Natural killer cell (primary cell): ENCODE measurements at regions of chr20 and their contacts with region 1.

Region 1: GRCh38 chr20:57398231-57398821 is 7.1 kb downstream of the RBM38 start:
- DNase-seq: peak; percentile 87 to 95
- ATAC-seq: peak; percentile 66 to 87 (median 78)
- H3K4me3 ChIP-seq: peak overlapping the region; percentile 17
- H3K4me3 Mint-ChIP-seq: peak overlapping the region; percentile 86
- H3K27ac ChIP-seq: peak overlapping the region; percentile 79
- H3K27ac Mint-ChIP-seq: peak overlapping the region; percentile 95 to 97
- H3K4me1 ChIP-seq: peaks cover 100% of the 10 kb centered on the region
- H3K4me1 Mint-ChIP-seq: peaks cover 79 to 94% of the 10 kb centered on the region in 2 donors
- H3K27me3 ChIP-seq: no peaks in the 10 kb centered on the region
- H3K27me3 Mint-ChIP-seq: no peaks in the 10 kb centered on the region
- CTCF ChIP-seq: no peak

Region 2: DNA sequence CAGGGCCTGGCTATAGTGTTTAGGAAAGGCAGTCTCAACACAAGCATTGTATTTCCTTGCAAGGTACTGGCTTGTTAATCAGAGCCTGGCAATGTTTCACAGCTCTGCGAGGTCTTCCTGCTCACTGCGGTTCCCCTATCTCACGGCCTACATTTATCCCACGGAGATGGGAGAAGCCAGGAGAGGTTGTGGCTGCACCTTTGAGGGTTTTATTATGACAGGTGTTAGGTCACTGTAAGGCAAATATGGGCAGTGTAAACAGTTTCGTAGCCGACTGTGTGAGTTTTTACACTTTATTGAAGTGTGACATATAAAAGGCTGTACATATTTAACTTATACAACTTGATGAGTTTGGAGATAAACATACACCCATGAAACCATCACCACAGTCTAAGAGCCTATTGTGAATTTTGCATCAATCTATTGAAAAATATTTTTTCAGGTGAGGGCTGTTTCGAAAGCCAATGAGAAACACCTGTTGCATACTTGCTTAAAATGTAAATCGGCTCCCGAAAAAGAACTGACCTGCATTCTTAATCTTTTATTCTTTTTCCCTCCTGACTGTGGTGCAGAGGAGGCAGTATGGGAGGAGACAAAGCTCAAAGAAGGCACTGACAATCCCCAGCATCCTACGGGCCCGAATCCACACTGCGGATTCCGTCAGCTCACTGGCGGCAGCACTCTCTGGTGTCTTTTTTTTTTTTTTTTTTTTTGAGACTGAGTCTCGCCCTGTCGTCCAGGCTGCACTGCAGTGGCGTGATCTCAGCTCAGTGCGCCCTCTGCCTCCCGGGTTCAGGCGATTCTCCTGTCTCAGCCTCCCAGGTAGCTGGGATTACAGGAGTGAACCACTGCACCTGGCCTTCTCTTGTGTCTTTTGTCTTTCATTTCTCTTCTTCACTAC is 14.6 kb before region 1 on chr20:
- intact Hi-C with region 1: loop called (anchors 2 kb)
- DNase-seq: no peak
- ATAC-seq: peak; percentile 40 to 59 (median 56)
- H3K4me3 ChIP-seq: no peak overlapping the region
- H3K4me3 Mint-ChIP-seq: peak overlapping the region; percentile 58
- H3K27ac ChIP-seq: peak overlapping the region; percentile 4
- H3K27ac Mint-ChIP-seq: peak overlapping the region; percentile 84 to 87
- H3K4me1 ChIP-seq: peaks cover 34% of the 10 kb centered on the region
- H3K4me1 Mint-ChIP-seq: peaks cover 40 to 47% of the 10 kb centered on the region in 2 donors
- H3K27me3 ChIP-seq: no peaks in the 10 kb centered on the region
- H3K27me3 Mint-ChIP-seq: no peaks in the 10 kb centered on the region
- CTCF ChIP-seq: no peak

Region 3: GRCh38 chr20:57432874-57433491 is 34.7 kb after region 1 on chr20:
- intact Hi-C with region 1: loop called (anchors 2 kb)
- DNase-seq: peak; percentile 53 to 82
- ATAC-seq: peak; percentile 64 to 80 (median 74)
- H3K4me3 ChIP-seq: no peak overlapping the region
- H3K4me3 Mint-ChIP-seq: peak overlapping the region; percentile 83
- H3K27ac ChIP-seq: peak overlapping the region; percentile 75
- H3K27ac Mint-ChIP-seq: peak overlapping the region; percentile 92 to 93
- H3K4me1 ChIP-seq: peaks cover 77% of the 10 kb centered on the region
- H3K4me1 Mint-ChIP-seq: peaks cover 57 to 59% of the 10 kb centered on the region in 2 donors
- H3K27me3 ChIP-seq: no peaks in the 10 kb centered on the region
- H3K27me3 Mint-ChIP-seq: no peaks in the 10 kb centered on the region
- CTCF ChIP-seq: no peak

Region 4: GRCh38 chr20:57480444-57481160 is 82.3 kb after region 1 on chr20:
- intact Hi-C with region 1: loop called (anchors 5 kb)
- DNase-seq: peak in 1 of 2 donors; percentile 45
- ATAC-seq: peak in 1 of 3 donors; percentile 59
- H3K4me3 ChIP-seq: no peak overlapping the region
- H3K4me3 Mint-ChIP-seq: no peak overlapping the region
- H3K27ac ChIP-seq: no peak overlapping the region
- H3K27ac Mint-ChIP-seq: peak overlapping the region in 1 of 2 donors; percentile 31
- H3K4me1 ChIP-seq: peaks cover 44% of the 10 kb centered on the region
- H3K4me1 Mint-ChIP-seq: peaks cover 11 to 35% of the 10 kb centered on the region in 2 donors
- H3K27me3 ChIP-seq: peaks cover 2% of the 10 kb centered on the region
- H3K27me3 Mint-ChIP-seq: peaks cover 8 to 18% of the 10 kb centered on the region in 2 donors
- CTCF ChIP-seq: no peak

Region 5: DNA sequence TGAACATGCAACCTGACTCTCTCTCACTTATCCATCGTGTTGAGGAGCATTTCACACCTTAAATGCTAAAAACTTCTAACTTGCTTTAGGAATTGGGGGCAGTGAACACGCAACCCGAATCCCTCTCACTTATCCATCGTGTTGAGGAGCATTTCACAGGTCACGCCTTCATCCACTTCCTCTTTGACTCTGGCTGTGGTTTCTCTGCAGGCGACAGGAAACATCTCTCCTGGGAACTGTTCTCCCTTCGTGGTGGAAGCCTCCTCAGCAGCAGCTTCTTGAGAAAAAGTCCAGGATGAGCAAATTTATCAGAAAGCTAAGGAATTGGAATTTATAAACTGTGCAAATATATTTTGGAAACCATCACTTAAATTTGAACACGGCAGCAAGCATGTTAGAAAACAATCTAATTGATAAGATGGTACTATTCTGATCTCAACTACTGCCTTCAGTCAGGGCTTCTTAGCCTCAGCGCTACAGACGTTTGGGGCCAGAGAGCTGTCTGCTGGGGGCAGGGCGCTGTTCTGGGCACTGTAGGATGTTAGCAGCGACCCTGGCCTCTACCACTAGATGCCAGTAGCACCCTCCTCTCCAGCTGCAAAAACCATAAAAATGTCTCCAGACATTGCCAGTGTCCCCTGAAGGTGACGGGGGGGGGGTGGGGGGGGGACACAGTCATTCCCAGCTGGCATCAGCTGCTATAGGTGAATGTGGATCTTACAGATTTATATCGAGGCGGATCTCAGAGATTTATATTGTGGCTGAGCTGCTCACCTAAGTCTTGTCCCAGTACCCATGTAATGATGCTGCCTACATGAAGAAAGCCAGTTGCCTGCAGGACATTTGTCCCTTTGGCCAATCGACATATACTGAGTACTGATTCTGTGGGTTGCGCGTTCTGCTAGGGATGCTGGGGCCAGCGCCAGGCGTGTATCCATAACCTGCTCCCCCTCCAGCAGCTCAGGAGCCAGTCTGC is 100.4 kb after region 1 on chr20:
- intact Hi-C with region 1: loop called (anchors 5 kb)
- DNase-seq: peak in 1 of 2 donors; percentile 65
- ATAC-seq: peak; percentile 84 to 90 (median 87)
- H3K4me3 ChIP-seq: no peak overlapping the region
- H3K4me3 Mint-ChIP-seq: no peak overlapping the region
- H3K27ac ChIP-seq: no peak overlapping the region
- H3K27ac Mint-ChIP-seq: no peak overlapping the region
- H3K4me1 ChIP-seq: peaks cover 20% of the 10 kb centered on the region
- H3K4me1 Mint-ChIP-seq: peaks cover 11 to 13% of the 10 kb centered on the region in 2 donors
- H3K27me3 ChIP-seq: peaks cover 10% of the 10 kb centered on the region
- H3K27me3 Mint-ChIP-seq: peaks cover 29 to 57% of the 10 kb centered on the region in 2 donors
- CTCF ChIP-seq: peak; percentile 48

Region 6: GRCh38 chr20:57605045-57605444 is 206.7 kb after region 1 on chr20:
- intact Hi-C with region 1: loop called (anchors 2 kb)
- DNase-seq: peak; percentile 58 to 80
- ATAC-seq: peak; percentile 84 to 93 (median 91)
- H3K4me3 ChIP-seq: no peak overlapping the region
- H3K4me3 Mint-ChIP-seq: peak overlapping the region; percentile 86
- H3K27ac ChIP-seq: peak overlapping the region; percentile 80
- H3K27ac Mint-ChIP-seq: peak overlapping the region; percentile 87 to 97
- H3K4me1 ChIP-seq: peaks cover 35% of the 10 kb centered on the region
- H3K4me1 Mint-ChIP-seq: peaks cover 46 to 57% of the 10 kb centered on the region in 2 donors
- H3K27me3 ChIP-seq: no peaks in the 10 kb centered on the region
- H3K27me3 Mint-ChIP-seq: no peaks in the 10 kb centered on the region
- CTCF ChIP-seq: no peak

Region 7: DNA sequence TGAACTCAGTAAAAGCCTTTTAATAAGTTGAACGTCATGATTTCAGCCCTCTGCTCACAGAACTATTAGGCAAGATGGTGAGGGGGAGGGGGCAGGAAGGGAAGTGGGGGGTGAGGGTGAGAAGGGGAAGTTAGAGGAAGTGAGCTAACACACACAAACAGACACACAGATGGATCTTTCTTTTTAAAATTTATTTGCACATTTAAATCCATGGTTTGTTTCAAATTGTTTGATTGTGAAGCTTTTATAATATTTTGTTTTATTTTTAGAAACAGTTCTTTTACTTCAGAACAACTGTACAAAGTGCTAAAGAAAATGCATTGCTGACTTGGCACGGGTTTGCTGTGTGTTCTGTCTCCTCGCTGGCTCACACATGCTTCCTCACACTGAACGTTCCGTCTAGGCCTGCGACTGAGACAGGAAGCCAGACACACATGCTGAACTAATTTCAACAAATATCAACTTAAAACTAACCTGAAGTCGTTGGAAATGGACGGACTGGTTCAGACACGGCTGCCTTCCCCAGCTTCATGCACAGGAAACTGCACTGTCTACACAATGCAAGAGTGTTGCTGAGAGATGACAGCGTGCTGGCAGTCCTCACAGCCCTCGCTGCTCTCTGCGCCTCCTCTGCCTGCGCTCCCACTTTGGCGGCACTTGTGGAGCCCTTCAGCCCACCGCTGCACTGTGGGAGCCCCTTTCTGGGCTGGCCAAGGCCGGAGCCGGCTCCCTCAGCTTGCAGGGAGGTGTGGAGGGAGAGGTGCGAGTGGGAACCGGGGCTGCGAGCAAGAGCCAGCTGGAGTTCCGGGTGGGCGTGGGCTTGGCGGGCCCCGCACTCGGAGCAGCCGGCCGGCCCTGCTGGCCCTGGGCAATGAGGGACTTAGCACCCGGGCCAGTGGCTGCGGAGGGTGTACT is 230.0 kb after region 1 on chr20:
- intact Hi-C with region 1: loop called (anchors 2 kb)
- DNase-seq: peak; percentile 49 to 90
- ATAC-seq: peak; percentile 83 to 91 (median 84)
- H3K4me3 ChIP-seq: peak overlapping the region; percentile 7
- H3K4me3 Mint-ChIP-seq: peak overlapping the region; percentile 88
- H3K27ac ChIP-seq: peak overlapping the region; percentile 97
- H3K27ac Mint-ChIP-seq: peak overlapping the region; percentile 96 to 99
- H3K4me1 ChIP-seq: peaks cover 40% of the 10 kb centered on the region
- H3K4me1 Mint-ChIP-seq: peaks cover 47 to 53% of the 10 kb centered on the region in 2 donors
- H3K27me3 ChIP-seq: no peaks in the 10 kb centered on the region
- H3K27me3 Mint-ChIP-seq: peaks cover 0 to 3% of the 10 kb centered on the region in 2 donors
- CTCF ChIP-seq: no peak